GM18951 (cell line): ENCODE measurements at regions of chr9 and their contacts with region 1.

Region 1: GRCh38 chr9:70587201-70587600 is 172.7 kb upstream of the KLF9 start:
- POLR2A ChIP-seq: no peak

Region 2: DNA sequence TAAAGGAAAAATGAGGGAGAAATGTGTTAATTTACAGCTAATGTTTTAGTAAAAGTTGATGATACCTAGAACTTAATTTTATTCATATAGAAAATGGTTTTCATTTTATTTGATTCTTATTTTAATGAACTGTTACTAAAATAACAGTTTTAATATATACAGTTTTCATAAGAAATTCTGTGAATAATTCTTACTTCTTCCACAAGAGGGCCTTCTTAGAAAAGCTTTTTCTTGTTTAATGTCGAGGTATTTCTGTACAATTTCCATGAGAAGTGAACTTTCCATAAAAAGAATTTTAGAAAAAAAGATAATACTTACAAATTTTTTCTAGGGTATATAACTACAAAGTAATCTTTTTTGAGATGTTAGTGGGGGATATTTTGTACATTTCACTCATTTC is 246.6 kb before region 1 on chr9:
- in situ Hi-C with region 1: loop called (anchors 25 kb)
- POLR2A ChIP-seq: no peak

Region 3: GRCh38 chr9:70484210-70485130 is 102.7 kb before region 1 on chr9:
- in situ Hi-C with region 1: loop called (anchors 10 kb)
- POLR2A ChIP-seq: no peak